ENCODE measurements at regions of chr1 and their contacts with region 1.

Region 1: DNA sequence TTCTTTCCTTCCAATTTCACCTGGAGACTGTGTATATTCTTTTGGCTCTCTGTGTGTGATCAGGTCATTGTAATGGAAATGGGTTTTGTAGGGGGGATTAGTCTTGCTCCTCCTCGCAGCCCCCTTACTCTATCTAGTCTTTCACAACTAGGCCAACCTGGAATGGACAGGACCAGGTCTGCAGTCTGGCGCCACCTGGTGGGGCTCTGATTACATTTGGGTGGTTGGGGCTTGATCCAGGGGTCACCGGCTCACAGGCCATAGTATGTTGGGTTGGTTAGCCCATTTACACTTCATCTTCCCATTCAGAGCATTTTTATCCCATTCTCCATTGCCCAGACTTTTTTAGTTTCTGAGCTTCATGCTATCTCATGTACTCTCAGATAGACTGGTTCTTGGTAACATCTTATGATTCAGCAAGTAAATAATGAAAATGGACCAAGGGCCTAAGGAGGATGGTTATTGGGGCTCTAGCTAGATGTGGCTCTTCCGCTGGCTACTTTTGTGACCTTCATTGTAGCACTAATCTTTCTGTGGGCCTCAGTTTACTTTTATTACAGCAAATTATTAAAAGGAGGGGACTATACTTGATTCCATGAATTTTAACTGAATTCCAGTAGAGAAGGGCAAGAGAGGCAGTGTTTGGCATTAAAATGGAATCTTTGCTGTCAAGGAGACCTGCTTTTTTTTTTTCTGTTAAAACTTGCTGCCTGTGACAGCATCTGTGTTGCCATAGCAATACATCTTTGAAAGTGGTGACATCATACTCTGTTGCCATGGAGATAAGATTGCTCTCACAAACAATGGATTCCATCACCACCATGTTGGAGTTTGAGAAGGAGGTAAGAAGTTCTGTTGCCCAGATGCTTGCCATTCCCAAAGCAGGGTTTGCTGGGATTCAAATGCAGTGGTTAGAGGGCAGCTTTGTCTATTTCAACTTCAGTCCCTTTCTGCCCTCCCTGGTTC is 150.1 kb downstream of the PLXNA2 start:
- DNase-seq: peak; percentile 67
- H3K4me3 ChIP-seq: peak overlapping the region in 1 of 2 experiments; percentile 8; a peak in 1 of 4 replicates
- H3K27ac ChIP-seq: peak overlapping the region in 1 of 2 experiments; percentile 71; a peak in 2 of 4 replicates
- H3K4me1 ChIP-seq: peaks cover 1 to 24% of the 10 kb centered on the region in 2 experiments; a peak in 2 of 4 replicates
- H3K27me3 ChIP-seq: no peaks in the 10 kb centered on the region
- CTCF ChIP-seq: peak; percentile 88
- EP300 ChIP-seq: no peak
- RAD21 ChIP-seq: peak; percentile 83

Region 2: DNA sequence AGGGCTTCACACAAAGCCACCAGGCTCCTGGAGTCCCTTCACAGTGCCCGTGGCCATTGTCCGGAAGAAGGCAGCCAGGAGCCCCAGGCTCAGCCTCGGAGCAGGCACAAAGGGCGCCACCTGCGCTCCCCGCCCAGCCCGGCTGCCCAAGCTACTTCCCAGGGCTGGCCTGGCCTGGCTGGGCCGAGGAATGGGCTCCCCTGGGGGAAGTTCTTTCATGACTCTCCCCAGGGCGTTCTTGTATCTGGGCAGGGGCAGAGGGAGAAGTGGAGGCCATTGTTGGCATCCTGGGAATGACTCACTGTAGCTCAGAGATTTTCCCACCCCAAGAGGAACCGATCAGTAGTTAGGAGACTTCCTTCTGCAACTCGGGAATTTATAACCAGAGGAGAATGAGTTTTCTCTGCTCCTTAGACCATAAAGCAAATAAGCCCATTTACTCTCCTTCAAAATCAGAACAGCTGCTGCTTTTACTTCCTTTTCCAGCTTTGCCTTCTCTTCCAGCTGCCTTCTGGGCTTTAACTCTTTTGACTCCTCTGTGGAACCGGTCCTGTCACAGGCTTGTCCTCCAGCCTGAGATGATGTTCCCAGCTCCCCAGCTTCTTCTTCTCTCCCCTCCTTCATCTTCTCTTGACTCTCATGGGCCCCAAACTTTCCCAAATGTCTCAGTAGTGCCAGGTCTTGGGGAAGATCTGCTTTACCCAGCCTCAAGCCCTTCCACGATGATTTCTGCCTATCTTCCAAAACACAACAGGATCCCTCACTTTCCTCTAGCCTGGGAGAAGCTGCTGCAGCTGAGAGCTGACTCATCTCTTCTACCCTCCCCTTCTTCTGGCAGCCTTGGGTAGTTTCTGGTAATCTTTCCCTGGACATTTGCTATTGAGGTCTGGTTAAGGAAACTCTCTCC is 64.4 kb before region 1 on chr1:
- CTCF ChIA-PET with region 1: interaction called, 275 read pairs
- POLR2A ChIA-PET with region 1: no interaction called
- DNase-seq: no peak
- H3K4me3 ChIP-seq: no peak overlapping the region
- H3K27ac ChIP-seq: peak overlapping the region in 1 of 2 experiments; percentile 90; a peak in 2 of 4 replicates
- H3K4me1 ChIP-seq: peaks cover 6 to 19% of the 10 kb centered on the region in 2 experiments; a peak in 3 of 4 replicates
- H3K27me3 ChIP-seq: no peaks in the 10 kb centered on the region
- CTCF ChIP-seq: no peak
- EP300 ChIP-seq: no peak; a peak in 1 of 4 replicates
- RAD21 ChIP-seq: no peak

Region 3: GRCh38 chr1:208059409-208059995 is 34.5 kb before region 1 on chr1:
- CTCF ChIA-PET with region 1: interaction called, 17 read pairs
- POLR2A ChIA-PET with region 1: no interaction called
- DNase-seq: peak; percentile 83
- H3K4me3 ChIP-seq: no peak overlapping the region
- H3K27ac ChIP-seq: peak overlapping the region; percentile 28 to 98; a peak in 3 of 4 replicates
- H3K4me1 ChIP-seq: peaks cover 20 to 50% of the 10 kb centered on the region in 2 experiments
- H3K27me3 ChIP-seq: no peaks in the 10 kb centered on the region
- CTCF ChIP-seq: no peak
- EP300 ChIP-seq: peak in 1 of 2 experiments; percentile 98; a peak in 2 of 4 replicates
- RAD21 ChIP-seq: no peak; the same call in none of the 2 replicates

Region 4: GRCh38 chr1:208071435-208072031 is 22.5 kb before region 1 on chr1:
- CTCF ChIA-PET with region 1: interaction called, 30 read pairs
- POLR2A ChIA-PET with region 1: no interaction called
- DNase-seq: no peak
- H3K4me3 ChIP-seq: no peak overlapping the region
- H3K27ac ChIP-seq: no peak overlapping the region
- H3K4me1 ChIP-seq: peaks cover 0 to 15% of the 10 kb centered on the region in 2 experiments; a peak in 2 of 4 replicates
- H3K27me3 ChIP-seq: no peaks in the 10 kb centered on the region
- CTCF ChIP-seq: no peak
- EP300 ChIP-seq: no peak
- RAD21 ChIP-seq: no peak

Region 5: DNA sequence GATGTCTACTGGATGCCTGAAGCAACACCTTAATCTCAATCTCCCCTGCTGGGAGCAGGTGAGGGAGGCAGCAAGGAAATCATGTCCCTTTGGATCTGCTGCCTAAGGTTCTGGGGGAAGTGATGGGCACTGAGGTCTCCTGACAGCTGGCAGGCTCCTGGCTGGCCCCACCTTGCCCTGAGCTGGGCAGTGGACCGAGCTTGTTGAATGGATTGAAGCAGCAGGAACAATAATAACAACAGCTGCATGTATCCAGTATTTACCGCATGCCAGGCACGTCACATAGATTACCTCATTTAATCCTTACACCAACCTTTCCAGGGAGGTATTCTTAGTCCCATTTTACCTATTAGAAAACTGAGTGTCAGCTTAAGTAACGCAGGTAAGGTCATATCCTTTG is 16.3 kb after region 1 on chr1:
- CTCF ChIA-PET with region 1: interaction called, 16 read pairs
- POLR2A ChIA-PET with region 1: no interaction called
- DNase-seq: no peak
- H3K4me3 ChIP-seq: no peak overlapping the region
- H3K27ac ChIP-seq: no peak overlapping the region
- H3K4me1 ChIP-seq: peaks cover 9 to 16% of the 10 kb centered on the region in 2 experiments; a peak in 3 of 4 replicates
- H3K27me3 ChIP-seq: no peaks in the 10 kb centered on the region
- CTCF ChIP-seq: no peak
- EP300 ChIP-seq: no peak
- RAD21 ChIP-seq: no peak

Region 6: DNA sequence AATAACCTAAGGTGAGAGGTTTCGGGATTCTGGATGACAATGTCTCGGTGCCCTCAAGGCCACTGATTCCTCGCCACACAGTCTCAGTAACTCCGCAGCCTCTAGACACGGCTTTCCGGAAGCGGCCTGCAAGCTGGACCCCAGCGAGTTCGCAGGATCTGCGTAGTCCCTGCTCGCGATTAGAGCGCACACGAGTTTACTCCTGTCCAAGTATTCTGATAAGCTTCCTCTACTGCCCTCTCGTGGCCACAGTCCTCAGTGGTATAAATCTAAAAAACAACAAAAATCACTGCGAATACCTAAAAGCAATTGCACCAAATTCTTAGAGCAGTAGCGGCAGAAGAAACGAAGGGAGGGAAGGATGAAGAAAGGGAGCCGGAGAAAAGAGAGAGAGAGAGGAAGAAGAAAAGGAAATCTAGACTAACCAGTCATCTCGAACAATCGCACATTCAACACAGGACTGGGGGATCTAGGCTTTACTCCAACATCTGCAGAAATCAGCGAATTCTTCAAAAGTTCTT is 151.2 kb after region 1 on chr1:
- CTCF ChIA-PET with region 1: interaction called, 84 read pairs
- POLR2A ChIA-PET with region 1: no interaction called
- DNase-seq: peak; percentile 85
- H3K4me3 ChIP-seq: peak overlapping the region; percentile 93 to 96
- H3K27ac ChIP-seq: peak overlapping the region; percentile 57 to 86
- H3K4me1 ChIP-seq: peaks cover under 1 to 42% of the 10 kb centered on the region in 2 experiments; a peak in 3 of 4 replicates
- H3K27me3 ChIP-seq: no peaks in the 10 kb centered on the region
- CTCF ChIP-seq: peak; percentile 83
- EP300 ChIP-seq: peak in 1 of 2 experiments; percentile 46; a peak in 2 of 4 replicates
- RAD21 ChIP-seq: peak; percentile 88

Region 7: GRCh38 chr1:208326036-208326435 is 232.0 kb after region 1 on chr1:
- CTCF ChIA-PET with region 1: no interaction called
- POLR2A ChIA-PET with region 1: no interaction called
- DNase-seq: no peak
- H3K4me3 ChIP-seq: no peak overlapping the region
- H3K27ac ChIP-seq: no peak overlapping the region
- H3K4me1 ChIP-seq: no peaks in the 10 kb centered on the region; a peak in 1 of 4 replicates
- H3K27me3 ChIP-seq: no peaks in the 10 kb centered on the region
- CTCF ChIP-seq: no peak
- EP300 ChIP-seq: no peak
- RAD21 ChIP-seq: no peak

Measured in SK-N-SH (cell line).